BJ (cell line): ENCODE measurements at regions of chr7 and their contacts with region 1.

Region 1: GRCh38 chr7:91034459-91035368 is 229.5 kb upstream of the FZD1 start:
- DNase-seq: no peak
- H3K4me3 ChIP-seq: no peak overlapping the region
- H3K27me3 ChIP-seq: no peaks in the 10 kb centered on the region
- CTCF ChIP-seq: peak; percentile 77

Region 2: DNA sequence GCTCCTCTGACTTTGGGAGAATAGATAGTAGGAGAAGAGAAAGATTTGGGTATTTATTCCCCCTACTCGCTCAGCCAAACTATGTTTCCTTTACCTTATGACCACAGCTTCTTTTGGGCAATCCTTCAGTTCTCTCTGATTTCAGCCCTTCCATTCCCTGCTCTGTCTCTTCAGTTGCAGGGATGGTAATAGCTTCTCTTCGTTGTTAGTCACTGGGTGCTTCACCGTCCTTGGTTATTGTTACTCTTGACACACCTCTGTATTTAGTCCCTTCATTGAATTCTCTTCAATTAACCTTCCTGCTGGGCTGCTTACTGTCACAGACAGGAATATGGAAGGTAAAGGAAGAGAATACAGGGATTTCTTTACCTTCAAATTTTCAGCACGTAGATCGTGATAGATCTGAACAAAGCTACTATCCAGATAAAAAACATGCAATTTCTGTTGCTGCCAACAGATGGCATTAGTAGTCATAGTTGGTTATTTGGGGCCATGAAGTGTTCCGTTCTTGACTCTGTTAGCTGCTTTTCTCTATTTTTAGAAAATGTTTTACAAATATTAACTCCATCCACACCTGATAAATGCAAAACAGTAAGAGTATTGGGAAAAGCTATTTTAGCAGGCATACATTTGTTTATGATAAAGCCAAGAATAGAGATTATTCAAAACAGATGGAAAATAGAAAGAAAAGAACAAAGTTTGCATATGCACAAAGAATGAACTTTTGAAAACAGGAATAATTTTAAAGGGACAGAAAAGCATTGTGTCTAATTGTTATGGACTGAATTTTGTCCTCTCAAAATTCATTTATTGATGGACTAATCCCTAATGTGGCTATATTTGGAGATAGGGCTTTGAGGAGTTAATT is 579.3 kb before region 1 on chr7:
- CTCF ChIA-PET with region 1: interaction called, 15 read pairs
- POLR2A ChIA-PET with region 1: no interaction called
- DNase-seq: peak; percentile 7
- H3K4me3 ChIP-seq: peak overlapping the region; percentile 22; the same call in 1 of the 2 replicates
- H3K27me3 ChIP-seq: no peaks in the 10 kb centered on the region; the same call in 1 of the 2 replicates
- CTCF ChIP-seq: peak; percentile 71

Region 3: GRCh38 chr7:90552521-90552920 is 482.2 kb before region 1 on chr7:
- CTCF ChIA-PET with region 1: interaction called, 18 read pairs
- POLR2A ChIA-PET with region 1: no interaction called
- DNase-seq: no peak
- H3K4me3 ChIP-seq: no peak overlapping the region
- H3K27me3 ChIP-seq: no peaks in the 10 kb centered on the region; the same call in 1 of the 2 replicates
- CTCF ChIP-seq: no peak; the same call in 1 of the 2 replicates

Region 4: DNA sequence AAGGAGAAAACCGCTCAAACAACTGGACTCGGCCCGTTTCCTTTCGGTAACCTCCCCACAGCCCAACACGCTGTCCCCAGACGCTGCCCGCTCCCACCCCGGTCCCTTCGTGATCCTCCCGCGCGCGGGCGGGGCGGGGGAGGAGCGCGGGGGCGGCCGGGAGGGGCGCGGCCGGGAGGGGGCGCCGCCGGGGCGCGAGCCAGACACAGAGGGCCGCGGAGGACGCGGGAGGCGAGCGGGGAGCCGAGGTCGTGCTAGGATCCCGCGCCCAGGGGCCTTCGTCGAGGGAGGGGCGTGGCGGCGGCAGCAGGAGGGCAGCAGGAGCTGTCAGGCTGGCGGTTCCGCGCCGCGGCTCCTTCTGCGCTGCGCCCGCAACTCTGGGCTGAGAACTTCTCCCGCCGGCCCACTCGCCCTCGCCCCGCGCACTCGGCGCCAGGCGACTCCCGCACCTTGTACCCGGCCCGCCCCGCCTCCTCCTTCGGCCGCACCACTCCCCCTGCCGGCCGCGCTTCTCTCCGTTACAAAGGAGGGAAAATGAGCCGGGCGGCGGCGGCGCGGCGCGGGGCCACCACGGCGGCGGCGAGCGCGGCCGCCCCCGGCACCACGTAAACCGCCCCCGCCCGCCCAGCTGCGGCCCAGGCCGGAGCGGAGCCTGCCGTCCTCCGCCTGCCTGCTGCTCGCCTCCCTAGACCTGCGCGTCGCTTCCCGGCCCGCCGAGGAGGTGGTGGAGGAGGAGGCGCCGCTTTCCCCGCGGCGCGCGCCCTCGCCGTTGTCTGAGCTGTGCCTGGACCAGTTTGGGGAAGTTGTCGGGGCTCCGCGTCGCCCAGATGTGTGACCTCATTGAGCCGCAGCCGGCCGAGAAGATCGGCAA is 438.7 kb before region 1 on chr7 and contains the start of gene CDK14:
- CTCF ChIA-PET with region 1: interaction called, 16 read pairs
- POLR2A ChIA-PET with region 1: no interaction called
- DNase-seq: no peak
- H3K4me3 ChIP-seq: peak within 1 kb of the TSS; percentile 87
- H3K27me3 ChIP-seq: no peaks in the 10 kb centered on the region
- CTCF ChIP-seq: peak; percentile 43
- polyA plus RNA-seq, gene CDK14: 6.7 and 11.8 TPM in 2 replicates

Region 5: GRCh38 chr7:90629297-90629918 is 405.3 kb before region 1 on chr7:
- CTCF ChIA-PET with region 1: interaction called, 15 read pairs
- POLR2A ChIA-PET with region 1: no interaction called
- DNase-seq: no peak
- H3K4me3 ChIP-seq: no peak overlapping the region
- H3K27me3 ChIP-seq: no peaks in the 10 kb centered on the region
- CTCF ChIP-seq: peak; percentile 66

Region 6: GRCh38 chr7:90910136-90910535 is 124.6 kb before region 1 on chr7:
- CTCF ChIA-PET with region 1: no interaction called
- POLR2A ChIA-PET with region 1: no interaction called
- DNase-seq: no peak
- H3K4me3 ChIP-seq: no peak overlapping the region
- H3K27me3 ChIP-seq: no peaks in the 10 kb centered on the region
- CTCF ChIP-seq: no peak

Region 7: DNA sequence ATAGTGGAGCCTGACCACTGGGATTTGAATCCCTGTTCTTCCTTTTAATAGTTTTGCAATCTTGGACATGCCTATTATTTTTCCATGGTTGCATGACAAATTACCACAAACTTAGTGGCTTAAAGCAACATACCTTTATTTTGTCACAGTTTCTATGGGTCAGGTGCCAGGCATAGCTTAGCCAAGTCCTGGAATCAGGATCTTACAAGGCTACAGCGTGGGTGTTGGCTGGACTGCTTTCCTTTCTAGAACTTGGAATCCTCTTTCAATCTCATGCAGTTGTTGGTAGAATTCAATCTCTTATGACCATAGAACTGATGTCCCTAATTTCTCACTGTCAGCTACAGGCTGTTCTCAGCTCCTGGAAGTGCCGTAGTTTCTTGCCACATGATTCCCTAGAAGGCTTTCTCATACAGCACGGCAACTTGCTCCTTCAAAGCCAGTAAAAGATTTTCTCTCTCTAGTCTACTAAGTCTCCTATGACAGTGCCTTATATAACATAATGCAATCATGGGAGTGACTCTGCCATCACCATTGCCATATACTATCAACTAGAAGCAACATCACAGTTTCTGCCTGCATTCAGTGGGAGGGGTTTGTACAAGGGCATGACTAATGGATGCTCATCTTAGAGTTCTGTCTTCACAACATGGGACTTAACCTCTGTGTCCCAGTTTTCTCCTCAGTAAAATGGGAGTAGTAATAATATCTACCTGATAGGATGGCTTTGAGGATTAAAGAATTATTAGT is 13.9 kb before region 1 on chr7:
- CTCF ChIA-PET with region 1: interaction called, 16 read pairs
- POLR2A ChIA-PET with region 1: interaction called, 4 read pairs
- DNase-seq: no peak
- H3K4me3 ChIP-seq: no peak overlapping the region
- H3K27me3 ChIP-seq: no peaks in the 10 kb centered on the region
- CTCF ChIP-seq: no peak